ENCODE measurements at regions of chr3 and their contacts with region 1.

Region 1: GRCh38 chr3:171566803-171567422 is 106.7 kb upstream of the TNIK start:
- DNase-seq: no peak
- H3K4me3 ChIP-seq: no peak overlapping the region
- H3K27ac ChIP-seq: no peak overlapping the region
- H3K4me1 ChIP-seq: no peaks in the 10 kb centered on the region
- H3K27me3 ChIP-seq: no peaks in the 10 kb centered on the region
- CTCF ChIP-seq: peak; percentile 61 to 89 (median 82)
- POLR2A ChIP-seq: no peak

Region 2: DNA sequence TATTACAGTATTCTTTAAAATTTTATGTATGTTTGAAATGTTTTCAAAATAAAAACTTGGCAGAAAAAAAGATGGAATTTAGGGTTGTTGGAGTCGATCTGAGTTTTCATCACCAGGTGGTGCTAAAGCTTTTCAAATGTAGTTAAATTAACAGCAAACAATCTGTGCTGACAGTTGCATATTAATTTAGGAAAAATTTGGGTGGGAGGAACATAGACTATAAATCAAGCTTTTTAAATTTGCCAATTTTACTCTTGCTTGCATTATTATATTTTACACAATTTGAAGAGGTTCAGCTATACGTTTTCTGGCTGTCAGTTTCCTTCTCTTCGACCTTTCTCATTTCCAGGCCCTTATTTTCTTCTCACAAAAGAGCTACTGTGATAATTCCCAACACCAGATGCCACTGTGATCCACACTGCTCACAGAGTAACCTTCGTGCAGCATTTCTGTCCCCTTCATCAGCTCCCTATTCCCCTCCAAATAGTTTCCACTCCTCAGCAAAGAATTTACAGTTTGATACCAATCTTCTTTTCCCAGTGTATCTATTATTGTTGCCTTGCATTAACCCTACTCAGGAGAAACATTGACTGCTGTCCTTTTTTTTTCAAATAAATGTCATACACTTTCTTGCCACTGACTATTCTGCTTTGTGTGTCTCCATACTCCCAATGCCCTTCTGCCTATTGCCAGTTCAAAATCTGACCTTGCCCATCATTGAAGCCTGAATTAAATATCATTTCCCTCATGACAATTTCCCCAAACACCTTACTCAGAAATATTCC is 605.1 kb before region 1 on chr3:
- intact Hi-C with region 1: loop called (anchors 5 to 10 kb)
- DNase-seq: peak in 2 of 7 donors; percentile 24 to 25
- H3K4me3 ChIP-seq: no peak overlapping the region
- H3K27ac ChIP-seq: no peak overlapping the region
- H3K4me1 ChIP-seq: no peaks in the 10 kb centered on the region
- H3K27me3 ChIP-seq: no peaks in the 10 kb centered on the region
- CTCF ChIP-seq: peak; percentile 33 to 79 (median 66)
- POLR2A ChIP-seq: no peak

Region 3: DNA sequence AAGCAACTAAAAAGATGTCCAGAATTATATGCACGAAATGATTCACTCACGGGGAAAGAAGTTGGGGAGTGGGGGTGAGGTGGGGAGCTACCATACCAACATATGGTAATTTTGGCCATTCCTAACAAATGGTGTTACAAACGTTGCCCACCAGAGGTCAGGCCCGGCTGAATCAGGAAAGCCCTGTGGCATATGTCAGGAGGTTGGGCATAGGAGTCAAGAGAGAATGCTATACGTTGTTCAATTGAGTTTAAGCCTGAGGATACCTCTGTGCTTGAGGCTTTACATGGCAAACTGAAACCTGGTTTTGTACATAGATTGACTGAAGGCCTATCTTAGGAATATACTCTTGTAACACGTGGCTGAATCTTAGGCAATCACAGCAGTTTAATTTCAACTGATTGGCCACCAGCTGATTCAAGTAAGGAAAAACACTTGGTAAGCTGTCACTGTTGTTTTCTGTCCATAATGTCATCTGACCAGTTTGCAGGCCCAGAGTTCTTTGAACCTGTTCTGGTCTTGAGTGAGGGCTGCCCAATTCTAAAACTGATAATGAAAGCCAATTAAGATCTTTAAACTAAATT is 517.0 kb before region 1 on chr3:
- intact Hi-C with region 1: loop called (anchors 10 kb)
- DNase-seq: peak; percentile 40 to 74 (median 62)
- H3K4me3 ChIP-seq: no peak overlapping the region
- H3K27ac ChIP-seq: no peak overlapping the region
- H3K4me1 ChIP-seq: peaks cover 0 to 5% of the 10 kb centered on the region in 2 donors
- H3K27me3 ChIP-seq: no peaks in the 10 kb centered on the region
- CTCF ChIP-seq: peak; percentile 52 to 77 (median 69)
- POLR2A ChIP-seq: no peak

Region 4: GRCh38 chr3:171187706-171188290 is 379.1 kb before region 1 on chr3:
- intact Hi-C with region 1: loop called in 1 of 2 experiments (anchors 10 kb)
- DNase-seq: peak in 2 of 7 donors; percentile 19 to 21
- H3K4me3 ChIP-seq: no peak overlapping the region
- H3K27ac ChIP-seq: no peak overlapping the region
- H3K4me1 ChIP-seq: peaks cover 1 to 8% of the 10 kb centered on the region in 2 donors
- H3K27me3 ChIP-seq: no peaks in the 10 kb centered on the region
- CTCF ChIP-seq: peak; percentile 29 to 66 (median 64)
- POLR2A ChIP-seq: no peak

Region 5: DNA sequence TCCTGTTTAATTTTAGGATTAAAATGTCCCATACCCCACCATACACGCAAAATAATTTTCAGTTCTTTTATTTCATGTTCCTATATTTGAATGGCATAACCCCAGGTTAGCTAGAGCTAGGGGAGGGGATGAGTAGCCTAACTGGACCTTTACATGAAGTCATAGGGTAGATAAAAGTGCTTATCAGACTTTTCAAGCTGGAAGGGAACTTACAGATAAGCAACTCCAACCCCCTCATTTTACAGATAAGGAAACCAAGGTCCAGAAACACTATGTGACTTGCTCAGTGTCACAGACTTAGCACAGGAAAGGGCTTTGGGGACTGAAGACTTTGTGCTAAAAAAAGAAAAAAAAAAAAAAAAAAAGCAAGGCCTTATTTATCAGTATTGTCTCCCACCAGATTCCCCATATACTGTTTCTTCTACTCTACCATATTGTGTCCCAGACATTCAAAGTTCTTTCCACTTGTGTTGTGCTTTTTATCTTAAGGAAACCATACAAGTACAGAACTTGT is 96.1 kb before region 1 on chr3:
- intact Hi-C with region 1: no loop called
- DNase-seq: no peak
- H3K4me3 ChIP-seq: no peak overlapping the region
- H3K27ac ChIP-seq: no peak overlapping the region
- H3K4me1 ChIP-seq: no peaks in the 10 kb centered on the region
- H3K27me3 ChIP-seq: no peaks in the 10 kb centered on the region
- CTCF ChIP-seq: no peak
- POLR2A ChIP-seq: no peak

Measured in adrenal gland (tissue), 19 donors.